ENCODE measurements at regions of chr3 and their contacts with region 1.

Region 1: DNA sequence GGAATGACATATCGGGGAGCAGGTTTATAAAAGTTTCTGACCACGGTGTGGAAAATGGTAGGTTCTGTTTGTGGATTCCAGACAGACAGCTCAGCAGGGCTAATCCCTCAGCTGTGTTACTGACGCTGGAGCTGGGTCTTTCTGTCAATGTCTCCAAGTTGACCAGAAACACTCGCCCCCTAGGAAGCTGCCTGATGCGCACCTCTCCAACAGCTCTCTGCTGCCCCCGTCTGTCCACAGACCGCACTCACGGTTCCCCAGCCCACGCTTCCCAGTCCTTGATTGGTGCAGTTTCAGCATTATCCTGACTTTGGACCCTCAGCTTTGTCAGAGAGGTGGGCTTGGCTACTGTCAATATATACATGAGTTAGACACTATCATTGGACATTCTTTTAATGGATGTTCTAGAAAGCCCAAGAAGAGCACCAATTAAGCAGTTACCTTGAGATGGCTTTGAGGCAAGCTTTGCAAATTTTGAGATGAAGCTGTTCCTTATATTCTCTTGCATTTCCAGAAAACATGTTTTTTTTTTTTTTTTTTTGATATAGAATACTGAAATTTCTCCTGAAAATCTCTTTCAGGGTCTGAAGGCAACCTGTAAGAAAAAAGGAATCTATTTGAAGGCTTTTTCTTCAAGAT is 98.9 kb upstream of the TBC1D5 start:
- DNase-seq: peak; percentile 72
- ATAC-seq: peak; percentile 93
- H3K4me3 Mint-ChIP-seq: no peak overlapping the region
- H3K27ac Mint-ChIP-seq: no peak overlapping the region
- H3K4me1 Mint-ChIP-seq: no peaks in the 10 kb centered on the region
- H3K27me3 Mint-ChIP-seq: no peaks in the 10 kb centered on the region
- CTCF ChIP-seq: peak; percentile 86

Region 2: GRCh38 chr3:17412950-17413530 is 428.3 kb before region 1 on chr3:
- CTCF ChIA-PET with region 1: interaction called, 6 read pairs
- POLR2A ChIA-PET with region 1: no interaction called
- intact Hi-C with region 1: loop called (anchors 5 kb)
- DNase-seq: no peak
- ATAC-seq: peak; percentile 76
- H3K4me3 Mint-ChIP-seq: no peak overlapping the region
- H3K27ac Mint-ChIP-seq: no peak overlapping the region
- H3K4me1 Mint-ChIP-seq: no peaks in the 10 kb centered on the region
- H3K27me3 Mint-ChIP-seq: no peaks in the 10 kb centered on the region
- CTCF ChIP-seq: peak; percentile 69

Region 3: DNA sequence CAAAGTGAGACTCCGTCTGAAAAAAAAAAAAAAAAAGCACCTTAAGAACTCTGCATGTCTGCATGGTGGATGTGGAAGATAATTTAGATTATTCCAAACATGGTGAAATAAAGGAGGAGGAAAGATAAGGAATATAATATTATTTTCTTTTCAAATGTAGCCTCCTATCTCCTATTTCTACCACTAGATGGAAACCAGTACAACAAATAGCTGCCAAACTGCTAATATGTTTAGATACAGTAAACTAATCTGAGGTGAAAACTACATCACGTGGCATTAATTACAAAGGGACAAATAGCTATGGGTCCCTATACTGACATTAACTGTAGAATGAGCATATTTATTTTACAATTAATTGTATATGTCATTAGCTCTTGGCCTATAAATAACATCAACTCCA is 296.7 kb before region 1 on chr3:
- CTCF ChIA-PET with region 1: interaction called, 14 read pairs
- POLR2A ChIA-PET with region 1: no interaction called
- intact Hi-C with region 1: loop called (anchors 1 kb)
- DNase-seq: no peak
- ATAC-seq: no peak
- H3K4me3 Mint-ChIP-seq: no peak overlapping the region
- H3K27ac Mint-ChIP-seq: no peak overlapping the region
- H3K4me1 Mint-ChIP-seq: no peaks in the 10 kb centered on the region
- H3K27me3 Mint-ChIP-seq: no peaks in the 10 kb centered on the region
- CTCF ChIP-seq: no peak

Region 4: DNA sequence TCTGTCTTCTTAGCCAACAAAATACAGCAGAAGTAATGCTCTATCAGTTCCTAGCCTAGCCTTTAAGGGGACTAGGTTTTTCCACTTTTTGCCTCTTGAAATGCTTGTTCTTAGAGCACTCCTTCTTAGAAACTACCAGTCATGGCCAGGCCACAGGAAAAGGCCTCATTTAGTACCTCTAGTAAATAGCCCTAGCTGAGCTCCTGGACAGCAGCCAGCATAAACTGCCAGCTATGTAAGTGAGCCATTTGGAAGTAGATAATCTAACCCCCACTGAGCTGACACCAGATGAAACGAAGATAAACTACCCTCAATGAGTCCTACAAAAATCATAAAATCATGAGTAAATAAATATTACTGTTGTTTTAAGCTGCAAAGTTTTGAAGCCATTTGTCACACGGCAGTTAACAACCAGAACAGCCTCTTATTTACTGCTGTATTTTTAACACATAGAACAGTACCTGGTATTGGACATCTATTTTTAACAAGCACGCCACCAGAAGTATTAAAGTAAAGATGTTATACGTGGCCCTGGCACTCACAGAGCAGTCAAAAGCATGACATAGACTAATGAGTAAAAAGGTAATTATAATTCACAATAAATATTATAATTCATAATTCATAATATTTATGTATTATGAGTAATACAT is 110.9 kb before region 1 on chr3:
- CTCF ChIA-PET with region 1: no interaction called
- POLR2A ChIA-PET with region 1: no interaction called
- intact Hi-C with region 1: no loop called
- DNase-seq: no peak
- ATAC-seq: no peak
- H3K4me3 Mint-ChIP-seq: no peak overlapping the region
- H3K27ac Mint-ChIP-seq: no peak overlapping the region
- H3K4me1 Mint-ChIP-seq: peaks cover 33% of the 10 kb centered on the region
- H3K27me3 Mint-ChIP-seq: no peaks in the 10 kb centered on the region
- CTCF ChIP-seq: no peak

Region 5: GRCh38 chr3:18127174-18127858 is 286.0 kb after region 1 on chr3:
- CTCF ChIA-PET with region 1: interaction called, 11 read pairs
- POLR2A ChIA-PET with region 1: no interaction called
- intact Hi-C with region 1: no loop called
- DNase-seq: peak; percentile 25
- ATAC-seq: peak; percentile 95
- H3K4me3 Mint-ChIP-seq: peak overlapping the region; percentile 51
- H3K27ac Mint-ChIP-seq: peak overlapping the region; percentile 67
- H3K4me1 Mint-ChIP-seq: peaks cover 30% of the 10 kb centered on the region
- H3K27me3 Mint-ChIP-seq: no peaks in the 10 kb centered on the region
- CTCF ChIP-seq: no peak